ENCODE measurements at regions of chr2 and their contacts with region 1.

Region 1: DNA sequence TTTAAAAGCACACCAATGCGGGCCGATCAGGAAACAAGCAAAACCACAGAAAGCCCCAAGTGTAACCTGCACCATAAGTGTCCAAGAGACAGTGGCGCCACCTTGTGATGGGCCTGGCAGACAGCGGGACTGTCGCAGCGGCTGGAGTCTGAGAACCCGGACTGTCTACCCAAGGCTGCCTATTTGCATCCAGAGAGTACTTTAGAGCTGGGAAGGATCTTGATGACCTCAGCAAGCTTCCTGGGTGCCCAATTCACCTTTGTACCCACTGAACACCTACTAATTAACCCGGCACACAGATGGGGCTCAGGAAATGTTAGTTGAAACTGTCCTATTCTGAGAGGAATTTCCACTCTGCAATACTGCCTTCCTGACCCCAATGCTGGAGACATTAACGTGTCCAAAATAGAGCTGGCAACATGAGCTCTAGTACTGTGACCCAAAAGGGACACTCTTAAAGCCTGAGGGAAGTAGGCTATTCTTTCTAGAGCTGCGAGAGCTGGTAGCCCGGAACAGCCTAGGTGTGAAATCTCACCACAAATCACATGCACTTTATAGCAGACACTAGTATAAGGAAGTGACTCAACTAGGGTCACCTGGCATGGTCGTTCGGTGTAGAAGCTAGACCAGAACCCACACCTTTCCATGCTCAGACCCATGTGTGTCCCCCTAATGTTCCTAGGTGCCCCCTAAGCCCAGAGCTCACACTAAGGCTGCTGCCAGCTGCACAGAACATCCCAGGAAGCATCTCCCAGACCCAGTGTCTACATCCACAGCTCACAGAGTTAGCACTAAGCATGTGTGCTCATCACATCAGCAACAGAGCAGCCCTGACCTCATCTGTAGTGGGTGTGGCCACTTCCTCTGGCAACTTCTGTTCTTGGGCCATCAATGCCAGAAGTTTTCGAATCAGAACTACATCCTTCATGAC is 25.4 kb downstream of the POLR1A start:
- DNase-seq: peak; percentile 56 to 82
- ATAC-seq: peak; percentile 87 to 95
- H3K4me3 ChIP-seq: no peak overlapping the region
- H3K27ac ChIP-seq: peak overlapping the region in 1 of 2 experiments; percentile 53; a peak in 3 of 6 replicates
- H3K4me1 ChIP-seq: peaks cover 22% of the 10 kb centered on the region; the same call in 2 of the 3 replicates
- CTCF ChIP-seq: peak; percentile 93
- EP300 ChIP-seq: no peak
- POLR2A ChIP-seq: no peak
- RAD21 ChIP-seq: peak; percentile 86 to 89

Region 2: DNA sequence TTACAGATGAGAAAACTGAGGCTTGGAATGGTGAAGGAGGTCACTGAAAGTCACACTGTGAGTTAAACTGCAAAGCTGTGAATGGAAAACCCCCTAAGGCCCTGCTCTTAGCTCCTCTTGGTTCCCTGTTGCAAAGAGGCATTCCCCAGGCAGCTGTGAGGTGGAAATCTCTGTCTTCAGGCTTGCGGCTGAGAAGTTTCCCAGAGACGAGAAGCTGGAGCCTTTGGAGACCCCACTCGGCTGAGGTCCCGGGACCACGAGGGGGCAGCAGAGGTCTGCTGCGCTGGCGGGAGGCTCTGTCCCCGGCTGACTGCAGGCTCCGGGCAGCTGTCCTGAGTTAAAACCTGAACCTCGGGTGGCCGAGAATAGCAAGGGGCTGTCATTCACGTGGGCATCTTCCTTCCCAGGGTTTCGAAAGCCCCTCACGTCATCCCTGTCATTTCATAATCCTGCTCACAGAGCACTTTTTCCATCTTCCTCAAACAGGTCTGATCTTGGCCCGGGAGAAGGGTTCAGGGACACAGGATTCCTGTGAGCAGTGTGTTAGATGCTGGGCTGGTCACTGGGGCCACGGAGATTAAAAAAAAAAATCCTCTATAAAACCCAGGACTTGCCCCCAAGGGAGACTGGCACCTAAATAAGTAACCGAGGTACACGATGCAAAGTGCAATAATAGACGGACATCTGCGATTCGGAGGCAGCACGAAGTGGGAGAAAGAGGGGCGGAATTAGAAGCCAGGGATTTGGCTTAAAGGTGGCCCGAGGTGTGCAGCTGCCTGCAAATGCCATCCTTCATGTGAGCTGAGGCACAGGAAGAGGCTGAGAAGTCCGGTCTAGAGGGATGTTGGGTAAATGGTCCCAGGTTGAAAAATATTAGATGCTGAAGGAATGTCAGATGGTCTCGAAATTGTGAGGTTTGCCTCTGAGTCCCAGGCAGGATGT is 351.1 kb before region 1 on chr2:
- CTCF ChIA-PET with region 1: interaction called, 32 read pairs
- POLR2A ChIA-PET with region 1: no interaction called
- DNase-seq: peak; percentile 83 to 93
- ATAC-seq: peak; percentile 96 to 99
- H3K4me3 ChIP-seq: 0 out of 3 replicates have a peak overlapping the region, but pooled peaks have one; percentile 11
- H3K27ac ChIP-seq: peak overlapping the region; percentile 68 to 70
- H3K4me1 ChIP-seq: peaks cover 24% of the 10 kb centered on the region
- CTCF ChIP-seq: peak; percentile 99
- EP300 ChIP-seq: peak in 1 of 2 experiments; percentile 51; a peak in 1 of 5 replicates
- POLR2A ChIP-seq: no peak
- RAD21 ChIP-seq: peak; percentile 100

Region 3: DNA sequence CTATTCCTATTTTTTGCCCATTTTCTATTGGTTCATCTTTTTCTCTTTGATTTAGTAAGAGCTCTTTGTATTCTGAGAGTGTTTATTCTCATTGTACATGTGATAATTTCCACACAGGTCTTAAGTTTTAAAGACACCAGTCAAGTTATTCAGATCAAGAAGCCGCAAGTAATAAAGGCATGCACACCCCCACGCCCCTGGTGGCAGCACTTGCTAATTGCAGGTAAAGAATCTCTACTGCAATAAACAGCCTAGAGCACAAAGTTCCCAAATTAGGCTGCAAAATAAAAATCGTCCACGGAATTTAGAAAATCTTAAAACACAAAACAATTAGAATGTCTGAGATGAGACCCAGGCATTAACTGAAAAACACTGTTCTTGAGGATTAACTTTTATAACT is 236.7 kb before region 1 on chr2:
- CTCF ChIA-PET with region 1: interaction called, 26 read pairs
- POLR2A ChIA-PET with region 1: no interaction called
- DNase-seq: peak; percentile 50 to 52
- ATAC-seq: peak in 1 of 2 experiments; percentile 49; a peak in 1 of 6 replicates
- H3K4me3 ChIP-seq: no peak overlapping the region
- H3K27ac ChIP-seq: no peak overlapping the region
- H3K4me1 ChIP-seq: no peaks in the 10 kb centered on the region
- CTCF ChIP-seq: peak; percentile 42
- EP300 ChIP-seq: no peak
- POLR2A ChIP-seq: no peak
- RAD21 ChIP-seq: peak in 1 of 2 experiments; percentile 31; a peak in 1 of 5 replicates

Region 4: GRCh38 chr2:85926931-85927661 is 153.2 kb before region 1 on chr2:
- CTCF ChIA-PET with region 1: interaction called, 28 read pairs
- POLR2A ChIA-PET with region 1: no interaction called
- DNase-seq: no peak
- ATAC-seq: peak; percentile 15 to 17; a peak in 3 of 6 replicates
- H3K4me3 ChIP-seq: no peak overlapping the region
- H3K27ac ChIP-seq: peak overlapping the region; percentile 69 to 82
- H3K4me1 ChIP-seq: peaks cover 73% of the 10 kb centered on the region
- CTCF ChIP-seq: no peak
- EP300 ChIP-seq: no peak
- POLR2A ChIP-seq: no peak
- RAD21 ChIP-seq: no peak; a peak in 1 of 5 replicates

Region 5: DNA sequence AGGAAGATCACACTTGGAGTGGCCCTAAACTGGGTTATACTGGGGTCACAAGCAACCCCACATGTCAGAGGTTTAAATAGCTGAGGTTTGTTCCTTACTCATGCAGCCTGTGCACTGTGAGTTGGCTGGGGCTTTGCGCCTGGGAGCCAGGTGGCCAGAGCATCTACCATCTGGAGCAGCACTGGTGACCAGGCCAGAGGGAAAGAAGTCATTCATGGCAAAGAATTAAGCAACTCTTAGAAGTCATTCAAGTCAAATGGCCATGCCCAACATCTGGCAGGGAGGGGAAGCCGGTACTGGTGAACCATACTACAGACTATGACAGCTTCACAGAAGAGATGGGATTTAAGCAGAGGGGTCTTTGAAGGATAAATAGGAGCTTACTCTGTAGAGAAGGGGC is 65.2 kb before region 1 on chr2:
- CTCF ChIA-PET with region 1: interaction called, 11 read pairs
- POLR2A ChIA-PET with region 1: no interaction called
- DNase-seq: no peak
- ATAC-seq: no peak
- H3K4me3 ChIP-seq: no peak overlapping the region
- H3K27ac ChIP-seq: no peak overlapping the region
- H3K4me1 ChIP-seq: peaks cover 16% of the 10 kb centered on the region
- CTCF ChIP-seq: no peak
- EP300 ChIP-seq: no peak
- POLR2A ChIP-seq: no peak
- RAD21 ChIP-seq: no peak

Region 6: DNA sequence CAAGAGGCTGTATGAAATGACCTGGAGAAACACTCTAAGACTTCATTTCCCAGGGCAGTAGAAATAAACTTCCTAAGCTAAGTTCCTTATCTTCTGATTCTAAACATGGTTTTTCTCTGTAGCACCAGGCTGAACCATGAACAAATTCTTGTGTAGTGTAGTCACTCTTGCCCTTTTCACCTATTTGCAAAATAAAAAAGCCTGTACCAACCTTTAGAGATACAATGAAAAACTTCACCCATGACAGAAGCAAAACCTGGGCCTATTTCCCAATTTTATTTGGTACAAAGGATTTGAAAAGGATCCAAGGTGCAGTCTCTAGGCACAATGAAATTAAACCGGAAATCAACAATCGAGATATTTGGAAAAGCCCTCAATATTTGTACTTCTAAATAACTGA is 18.2 kb before region 1 on chr2:
- CTCF ChIA-PET with region 1: interaction called, 64 read pairs
- POLR2A ChIA-PET with region 1: no interaction called
- DNase-seq: peak; percentile 21 to 65
- ATAC-seq: peak; percentile 78 to 86; a peak in 5 of 6 replicates
- H3K4me3 ChIP-seq: no peak overlapping the region
- H3K27ac ChIP-seq: peak overlapping the region; percentile 67 to 80
- H3K4me1 ChIP-seq: peaks cover 31% of the 10 kb centered on the region
- CTCF ChIP-seq: no peak
- EP300 ChIP-seq: 0 out of 5 replicates have a peak, but pooled peaks of 1 of the 2 experiments have one; percentile 28
- POLR2A ChIP-seq: no peak
- RAD21 ChIP-seq: 0 out of 5 replicates have a peak, but pooled peaks of 1 of the 2 experiments have one; percentile 26

Region 7: DNA sequence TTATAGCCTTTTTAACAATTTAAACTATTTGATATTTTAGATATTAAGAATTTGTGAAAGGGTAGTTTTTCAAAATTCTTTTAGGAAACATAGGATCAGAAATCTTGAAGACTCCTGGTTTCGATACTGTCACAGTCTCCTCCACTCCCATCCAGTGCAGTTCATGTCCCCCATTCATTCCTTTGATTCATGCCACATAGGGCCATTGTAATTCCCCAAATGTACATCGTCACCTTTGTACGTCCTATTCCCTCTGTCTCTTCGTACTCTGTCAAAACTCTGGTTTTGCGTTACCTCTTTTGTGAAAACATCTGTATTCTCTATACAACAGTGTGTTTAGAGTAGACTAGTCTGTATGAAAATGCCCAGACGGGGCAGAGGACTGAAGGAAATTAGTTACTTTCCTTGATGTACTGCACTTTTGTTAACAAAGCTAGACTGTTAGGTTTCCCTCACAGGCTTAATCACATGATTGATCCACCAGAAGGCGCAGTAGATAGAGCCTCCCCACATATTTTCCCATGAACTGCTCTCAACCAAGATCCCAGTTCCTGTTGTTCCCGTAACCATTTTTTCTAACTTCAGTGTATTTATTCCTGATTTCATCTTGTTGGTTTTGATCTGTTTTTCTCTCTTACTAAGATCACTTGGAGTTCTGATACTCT is 121.6 kb after region 1 on chr2:
- CTCF ChIA-PET with region 1: no interaction called
- POLR2A ChIA-PET with region 1: no interaction called
- DNase-seq: no peak
- ATAC-seq: no peak
- H3K4me3 ChIP-seq: no peak overlapping the region
- H3K27ac ChIP-seq: no peak overlapping the region
- H3K4me1 ChIP-seq: peaks cover 11% of the 10 kb centered on the region; the same call in 1 of the 3 replicates
- CTCF ChIP-seq: no peak
- EP300 ChIP-seq: no peak
- POLR2A ChIP-seq: no peak
- RAD21 ChIP-seq: no peak